GM23248 (cell line): ENCODE measurements at regions of chr5 and their contacts with region 1.

Region 1: GRCh38 chr5:54517174-54518092 is at the start of gene SNX18:
- DNase-seq: peak; percentile 97
- H3K4me3 ChIP-seq: peak within 1 kb of the TSS; percentile 98
- H3K27ac ChIP-seq: peak within 1 kb of the TSS; percentile 52
- H3K4me1 ChIP-seq: peaks cover 39% of the 10 kb centered on the region
- H3K27me3 ChIP-seq: no peaks in the 10 kb centered on the region
- total RNA-seq, gene SNX18: 74.4 and 77.3 TPM in 2 replicates

Region 2: GRCh38 chr5:54753034-54753433 is 235.6 kb after region 1 on chr5:
- in situ Hi-C with region 1: loop called (anchors 10 kb)
- DNase-seq: peak; percentile 82
- H3K4me3 ChIP-seq: peak overlapping the region; percentile 37
- H3K27ac ChIP-seq: no peak overlapping the region
- H3K4me1 ChIP-seq: peaks cover 23% of the 10 kb centered on the region
- H3K27me3 ChIP-seq: no peaks in the 10 kb centered on the region

Region 3: DNA sequence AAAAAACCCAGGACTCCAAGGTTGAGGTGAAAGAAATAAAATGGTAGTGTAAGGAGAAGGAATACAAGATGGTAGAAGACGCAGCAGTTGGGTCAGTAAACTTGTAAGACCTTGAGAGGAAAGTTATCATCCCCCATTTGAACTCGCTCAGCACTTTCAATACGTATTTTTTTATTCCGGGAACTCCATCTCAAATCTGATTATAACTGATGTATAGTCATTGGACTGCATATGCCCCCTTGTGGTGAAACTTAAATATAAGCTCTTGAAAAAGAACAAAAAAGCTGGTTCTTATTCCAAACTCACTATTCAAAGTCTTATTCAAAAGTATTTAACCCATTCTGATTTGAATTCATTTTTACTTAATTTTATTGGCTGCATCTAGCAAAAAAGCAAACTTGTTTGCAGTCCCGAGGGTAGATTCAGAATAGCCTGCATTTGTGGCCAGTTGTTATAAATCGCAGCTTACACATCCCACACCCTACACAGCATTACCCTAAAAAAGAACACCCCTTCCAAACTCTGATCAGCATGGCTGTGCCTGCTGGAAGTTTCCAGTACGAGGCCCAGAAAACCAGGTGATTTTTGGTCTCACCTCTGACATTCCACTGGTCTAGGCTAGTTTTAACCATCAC is 350.0 kb after region 1 on chr5:
- in situ Hi-C with region 1: loop called (anchors 10 kb)
- DNase-seq: peak; percentile 81
- H3K4me3 ChIP-seq: peak overlapping the region; percentile 46
- H3K27ac ChIP-seq: no peak overlapping the region
- H3K4me1 ChIP-seq: no peaks in the 10 kb centered on the region
- H3K27me3 ChIP-seq: no peaks in the 10 kb centered on the region

Region 4: DNA sequence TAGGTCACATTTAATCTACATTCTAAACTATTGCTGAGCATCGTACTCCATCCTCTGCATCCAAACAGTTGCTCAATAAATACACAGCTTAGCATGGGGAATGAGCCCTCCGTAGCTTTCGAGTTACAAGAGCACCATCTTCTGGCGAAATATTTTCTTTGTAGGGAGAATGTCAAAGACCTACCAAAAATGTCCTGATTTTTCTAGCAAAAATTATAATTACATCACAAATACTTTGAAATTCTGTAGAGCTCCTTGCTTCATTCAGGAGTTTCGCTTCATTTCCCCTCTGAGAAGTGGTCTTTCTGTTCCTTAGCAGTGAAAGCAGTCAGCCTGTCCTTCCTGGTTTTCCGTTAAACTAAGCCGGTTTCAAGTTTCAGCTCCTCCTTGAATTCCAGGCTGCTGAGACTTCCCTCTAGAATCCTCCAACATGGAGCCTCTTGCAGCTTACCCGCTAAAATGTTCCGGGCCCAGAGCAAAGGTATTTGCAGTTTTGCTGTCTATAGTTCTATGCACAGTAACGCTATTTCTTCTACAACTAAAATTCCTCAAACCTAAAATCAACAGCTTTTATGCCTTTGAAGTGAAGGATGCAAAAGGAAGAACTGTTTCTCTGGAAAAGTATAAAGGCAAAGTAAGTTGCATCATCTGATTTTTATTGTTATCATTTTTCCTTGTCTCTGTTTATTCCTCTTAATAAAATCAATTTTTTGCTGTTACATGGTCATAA is 642.5 kb after region 1 on chr5 and contains the start of gene GPX8:
- in situ Hi-C with region 1: loop called (anchors 10 kb)
- DNase-seq: peak; percentile 95
- H3K4me3 ChIP-seq: peak within 1 kb of the TSS; percentile 98
- H3K27ac ChIP-seq: peak within 1 kb of the TSS; percentile 99
- H3K4me1 ChIP-seq: peaks cover 31% of the 10 kb centered on the region
- H3K27me3 ChIP-seq: no peaks in the 10 kb centered on the region
- total RNA-seq, gene GPX8: 233 and 241 TPM in 2 replicates